Panc1 (cell line): ENCODE measurements at regions of chr17 and their contacts with region 1.

Region 1: GRCh38 chr17:49694847-49695683 is 12.7 kb downstream of the SLC35B1 start:
- DNase-seq: no peak
- ATAC-seq: peak; percentile 52
- H3K4me3 ChIP-seq: peak overlapping the region; percentile 9 to 40; a peak in 3 of 4 replicates
- H3K27ac ChIP-seq: peak overlapping the region; percentile 13; the same call in 1 of the 2 replicates
- H3K4me1 ChIP-seq: peaks cover 7% of the 10 kb centered on the region
- H3K27me3 ChIP-seq: no peaks in the 10 kb centered on the region
- CTCF ChIP-seq: peak; percentile 94

Region 2: DNA sequence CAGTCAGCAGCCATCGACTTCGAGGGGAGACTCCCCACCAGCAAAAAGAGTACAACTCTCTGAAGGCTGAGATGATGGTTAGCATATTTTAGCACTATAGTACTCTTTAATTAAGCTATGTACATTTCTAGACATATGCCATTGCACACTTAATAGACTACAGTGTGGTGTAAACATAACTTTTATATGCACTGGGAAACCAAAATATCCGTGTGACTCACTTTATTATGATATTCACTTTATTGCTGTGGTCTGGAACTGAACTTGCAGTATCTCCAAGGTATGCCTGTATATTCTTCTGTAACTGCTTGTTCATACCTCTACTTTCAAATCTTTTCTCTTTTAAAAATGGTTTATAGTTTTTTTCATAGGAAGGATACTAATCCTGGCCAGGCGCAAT is 130.4 kb before region 1 on chr17:
- CTCF ChIA-PET with region 1: interaction called, 12 read pairs
- POLR2A ChIA-PET with region 1: no interaction called
- in situ Hi-C with region 1: no loop called
- intact Hi-C with region 1: no loop called
- DNase-seq: no peak
- ATAC-seq: no peak
- H3K4me3 ChIP-seq: no peak overlapping the region
- H3K27ac ChIP-seq: no peak overlapping the region
- H3K4me1 ChIP-seq: peaks cover 4% of the 10 kb centered on the region; the same call in 1 of the 2 replicates
- H3K27me3 ChIP-seq: peaks cover 3% of the 10 kb centered on the region
- CTCF ChIP-seq: no peak

Region 3: GRCh38 chr17:49575579-49576087 is 119.4 kb before region 1 on chr17 and contains the start of gene NXPH3:
- CTCF ChIA-PET with region 1: interaction called, 13 read pairs
- POLR2A ChIA-PET with region 1: no interaction called
- in situ Hi-C with region 1: no loop called
- intact Hi-C with region 1: loop called (anchors 1 kb)
- DNase-seq: no peak
- ATAC-seq: peak; percentile 83
- H3K4me3 ChIP-seq: peak within 1 kb of the TSS; percentile 50 to 69
- H3K27ac ChIP-seq: no peak within 1 kb of the TSS
- H3K4me1 ChIP-seq: peaks cover 11% of the 10 kb centered on the region
- H3K27me3 ChIP-seq: no peaks in the 10 kb centered on the region
- CTCF ChIP-seq: peak; percentile 96
- total RNA-seq, gene NXPH3: 0.57 TPM